AG04450 (cell line): ENCODE measurements at regions of chr15 and their contacts with region 1.

Region 1: DNA sequence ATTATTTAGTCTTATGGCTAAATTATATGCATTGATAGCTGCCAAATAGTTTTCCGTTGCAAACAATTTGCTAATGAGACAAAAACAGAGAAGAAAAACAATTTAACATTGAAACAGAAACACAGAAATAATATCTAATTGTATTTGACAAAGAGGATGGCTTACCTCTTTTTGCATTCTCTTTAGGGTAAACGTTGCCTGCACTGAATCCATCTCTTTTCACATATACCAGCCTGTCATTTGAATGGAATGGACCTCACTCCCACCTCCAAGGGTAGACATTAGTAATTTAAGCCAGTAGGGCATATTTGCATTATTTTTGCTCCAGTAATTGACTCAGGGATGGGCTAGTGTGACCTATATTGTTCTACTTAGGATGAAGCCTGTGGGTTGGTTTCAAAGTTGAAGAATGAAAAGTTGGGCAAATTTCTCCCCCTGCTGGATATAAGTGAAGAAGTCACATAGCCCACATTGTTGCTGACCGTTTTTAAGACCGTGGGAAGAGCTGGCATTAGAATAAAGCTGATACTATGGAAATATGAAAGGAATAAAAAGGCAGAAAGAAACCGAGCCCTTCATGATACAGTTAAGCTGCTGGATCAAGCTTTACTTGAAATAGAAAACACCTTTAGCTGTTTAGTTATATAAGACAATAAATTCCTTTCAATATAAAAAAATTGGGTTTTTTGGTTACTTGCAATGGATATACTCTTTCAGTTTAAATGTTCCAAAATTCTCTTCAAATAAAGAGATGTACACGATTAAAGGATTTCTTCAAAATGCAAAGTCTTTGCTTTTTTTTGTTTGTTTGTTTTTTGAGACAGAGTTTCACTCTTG is 26.9 kb downstream of the PIERCE2 start:
- DNase-seq: peak; percentile 37
- H3K4me3 ChIP-seq: no peak overlapping the region
- H3K27ac ChIP-seq: no peak overlapping the region
- H3K27me3 ChIP-seq: no peaks in the 10 kb centered on the region
- CTCF ChIP-seq: peak; percentile 75

Region 2: DNA sequence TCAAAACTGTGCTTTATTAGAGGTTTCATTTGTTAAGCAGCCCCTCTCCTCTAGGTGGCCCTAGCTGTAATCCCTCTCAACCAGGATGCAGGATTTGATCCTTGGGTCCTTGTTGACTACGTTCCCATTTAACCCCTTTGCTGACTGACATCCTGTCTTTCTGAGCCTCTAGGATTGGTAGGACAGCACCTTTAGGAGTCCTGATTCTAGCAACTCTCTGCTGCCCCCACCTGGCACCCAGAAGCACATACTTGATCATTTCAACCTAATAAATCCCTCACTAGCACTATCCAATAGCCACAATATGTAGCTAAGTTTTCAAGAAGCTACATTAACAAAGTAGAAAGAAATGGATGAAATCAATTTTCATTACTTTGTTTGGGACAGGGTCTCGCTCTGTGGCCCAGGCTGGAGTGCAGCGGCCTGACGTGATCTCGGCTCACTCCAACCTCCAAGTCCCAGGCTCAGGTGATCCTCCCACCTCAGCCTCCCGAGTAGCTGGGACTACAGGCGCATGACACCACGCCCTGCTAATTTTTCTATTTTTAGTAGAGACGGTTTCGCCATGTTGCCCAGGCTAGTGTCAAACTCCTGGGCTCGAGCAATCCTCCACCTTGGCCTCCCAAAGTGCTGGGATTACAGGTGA is 266.8 kb before region 1 on chr15:
- CTCF ChIA-PET with region 1: interaction called, 20 read pairs
- POLR2A ChIA-PET with region 1: no interaction called
- DNase-seq: peak; percentile 21
- H3K4me3 ChIP-seq: no peak overlapping the region
- H3K27ac ChIP-seq: no peak overlapping the region
- H3K27me3 ChIP-seq: no peaks in the 10 kb centered on the region
- CTCF ChIP-seq: peak; percentile 92

Region 3: GRCh38 chr15:55318588-55319494 is 116.4 kb before region 1 on chr15 and contains the starts of genes PIGB and PIGBOS1:
- CTCF ChIA-PET with region 1: interaction called, 15 read pairs
- POLR2A ChIA-PET with region 1: interaction called, 8 read pairs
- DNase-seq: peak; percentile 70
- H3K4me3 ChIP-seq: peak within 1 kb of the TSS; percentile 92
- H3K27ac ChIP-seq: peak within 1 kb of the TSS; percentile 91
- H3K27me3 ChIP-seq: no peaks in the 10 kb centered on the region
- CTCF ChIP-seq: peak; percentile 23; the same call in 1 of the 2 replicates
- polyA plus RNA-seq, gene PIGB: 17.5 and 19.6 TPM in 2 replicates
- polyA plus RNA-seq, gene PIGBOS1: 15.0 and 19.7 TPM in 2 replicates

Region 4: DNA sequence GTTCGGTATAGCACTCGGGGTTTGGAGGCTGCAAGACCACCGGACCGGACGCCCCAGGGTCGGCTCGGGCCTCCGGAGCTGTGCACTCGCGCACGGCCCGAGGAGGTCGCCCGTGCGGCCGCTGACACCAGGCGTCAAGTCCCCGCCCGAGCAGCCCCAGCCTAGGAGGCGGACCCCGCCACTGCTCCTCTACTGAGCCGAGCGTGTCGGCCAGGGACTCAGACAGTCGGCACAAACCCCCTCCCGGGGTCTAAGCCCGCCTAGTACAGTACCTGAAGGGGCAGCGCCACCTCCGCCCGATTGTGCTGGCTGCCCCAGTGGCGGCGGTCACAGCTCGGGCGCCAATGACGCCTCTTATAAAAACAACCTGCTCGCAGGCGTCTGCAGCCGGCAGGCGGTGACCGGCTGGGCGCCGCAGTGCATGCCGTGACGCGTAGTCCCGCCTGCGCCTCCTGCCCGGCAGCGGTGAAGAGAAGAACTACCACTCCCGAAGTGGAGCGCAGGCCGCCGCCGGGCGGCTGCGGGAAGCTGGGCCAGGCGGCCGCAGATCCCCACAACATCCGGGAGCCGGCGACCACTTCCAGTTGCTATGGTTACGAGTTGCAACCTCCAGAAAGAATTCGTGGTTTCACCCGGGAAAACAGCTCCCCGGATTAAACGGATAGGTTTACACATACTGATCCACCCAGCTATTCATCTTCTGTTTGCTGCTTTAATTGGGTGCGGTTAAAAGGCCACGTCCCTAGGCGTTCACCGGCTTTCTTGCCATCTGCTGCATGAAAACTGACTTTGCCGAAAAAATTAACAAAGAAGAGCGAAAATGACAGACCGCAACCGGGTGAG is 27.0 kb before region 1 on chr15 and contains the starts of genes CCPG1 and PIERCE2:
- CTCF ChIA-PET with region 1: interaction called, 42 read pairs
- POLR2A ChIA-PET with region 1: no interaction called
- DNase-seq: peak; percentile 85
- H3K4me3 ChIP-seq: peak within 1 kb of the TSS; percentile 86
- H3K27ac ChIP-seq: peak within 1 kb of the TSS; percentile 75
- H3K27me3 ChIP-seq: no peaks in the 10 kb centered on the region
- CTCF ChIP-seq: peak; percentile 74
- polyA plus RNA-seq, gene CCPG1: 32.0 and 43.7 TPM in 2 replicates
- polyA plus RNA-seq, gene PIERCE2: 2.1 and 3.0 TPM in 2 replicates

Region 5: DNA sequence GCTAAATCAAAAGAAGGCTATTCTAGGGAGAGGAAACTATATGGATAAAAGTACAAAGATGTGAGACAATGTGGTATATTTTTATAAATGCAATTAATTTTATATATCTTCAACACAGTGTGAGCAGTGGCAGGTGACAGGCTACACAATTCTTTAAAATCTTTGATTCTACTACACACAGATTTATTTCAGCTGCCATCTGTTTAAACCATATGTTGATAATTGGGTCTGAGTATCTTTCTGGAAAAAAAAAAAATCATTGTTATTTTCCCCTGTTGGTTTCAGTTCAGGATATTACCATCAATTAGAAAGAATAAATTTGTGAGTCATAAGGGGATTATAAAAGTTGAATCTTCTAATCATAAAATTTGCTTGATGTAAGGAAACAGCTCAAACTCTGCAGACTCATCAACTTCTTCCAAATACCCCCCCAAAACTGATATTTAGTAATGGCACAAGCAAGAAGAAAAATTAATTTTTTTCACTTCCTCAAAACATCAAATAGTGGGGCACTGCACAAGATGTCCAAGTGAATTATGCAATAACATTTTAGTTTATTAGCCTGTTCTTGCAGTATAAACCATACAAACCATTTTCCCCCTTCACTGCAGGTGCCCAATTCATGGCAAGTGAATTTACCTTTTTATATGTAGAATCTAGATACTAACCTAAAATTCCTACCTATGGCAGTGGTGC is 14.9 kb before region 1 on chr15:
- CTCF ChIA-PET with region 1: interaction called, 12 read pairs
- POLR2A ChIA-PET with region 1: no interaction called
- DNase-seq: no peak
- H3K4me3 ChIP-seq: no peak overlapping the region
- H3K27ac ChIP-seq: no peak overlapping the region
- H3K27me3 ChIP-seq: no peaks in the 10 kb centered on the region
- CTCF ChIP-seq: no peak

Region 6: GRCh38 chr15:55457401-55458022 is 22.3 kb after region 1 on chr15:
- CTCF ChIA-PET with region 1: interaction called, 14 read pairs
- POLR2A ChIA-PET with region 1: no interaction called
- DNase-seq: no peak
- H3K4me3 ChIP-seq: no peak overlapping the region
- H3K27ac ChIP-seq: no peak overlapping the region
- H3K27me3 ChIP-seq: no peaks in the 10 kb centered on the region
- CTCF ChIP-seq: no peak